PC-3 (cell line): ENCODE measurements at regions of chrX and their contacts with region 1.

Region 1: GRCh38 chrX:48917139-48918001 is 1.5 kb downstream of the PIM2 start:
- DNase-seq: peak; percentile 93
- ATAC-seq: peak; percentile 36
- H3K4me3 ChIP-seq: peak overlapping the region; percentile 90
- H3K27ac ChIP-seq: no peak overlapping the region
- H3K4me1 ChIP-seq: peaks cover 19% of the 10 kb centered on the region
- H3K27me3 ChIP-seq: no peaks in the 10 kb centered on the region
- CTCF ChIP-seq: peak; percentile 91

Region 2: DNA sequence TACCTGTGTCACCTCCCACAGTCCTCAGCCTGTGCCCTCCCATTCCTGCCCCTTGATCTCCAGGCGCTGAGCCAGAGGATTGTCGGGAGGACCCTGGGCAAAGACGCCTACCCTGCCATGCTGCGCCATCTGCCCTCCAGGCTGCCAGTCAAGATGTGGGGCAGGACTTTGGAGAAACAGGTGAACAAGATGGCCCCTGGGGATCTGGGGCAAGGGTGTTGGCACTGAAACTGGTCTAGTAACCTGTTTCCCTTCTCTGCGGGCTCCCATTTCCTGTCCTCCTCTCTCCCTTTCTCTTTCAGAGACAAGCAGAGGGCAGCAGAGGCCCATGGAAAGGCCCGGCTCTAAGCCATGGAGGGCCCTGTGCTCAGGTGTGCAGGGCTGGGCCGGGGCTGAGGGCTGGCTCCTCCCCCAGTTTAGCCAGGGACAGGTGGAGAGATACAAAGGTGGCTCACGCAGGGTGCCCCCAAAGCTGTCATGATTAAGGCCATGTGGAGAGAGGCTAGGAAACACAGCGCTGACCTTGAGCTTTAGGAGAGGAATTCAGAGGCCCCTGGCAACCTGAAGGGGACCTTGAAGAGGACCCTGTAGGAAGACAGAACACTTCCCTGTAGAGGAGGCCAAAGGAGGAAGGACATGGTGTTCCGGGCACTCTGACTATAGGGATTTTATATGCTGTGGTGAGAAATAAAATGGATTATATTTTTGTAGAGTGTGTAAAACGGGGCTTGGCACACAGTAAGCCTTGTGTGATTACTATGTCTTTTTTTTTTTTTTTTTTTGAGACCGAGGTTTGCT is 155.5 kb before region 1 on chrX and contains the start of gene GLOD5:
- CTCF ChIA-PET with region 1: no interaction called
- POLR2A ChIA-PET with region 1: no interaction called
- intact Hi-C with region 1: loop called (anchors 5 kb)
- DNase-seq: peak; percentile 88
- ATAC-seq: peak; percentile 100
- H3K4me3 ChIP-seq: no peak within 1 kb of the TSS
- H3K27ac ChIP-seq: 0 out of 2 replicates have a peak within 1 kb of the TSS, but pooled peaks have one; percentile 14
- H3K4me1 ChIP-seq: peaks cover 5% of the 10 kb centered on the region
- H3K27me3 ChIP-seq: no peaks in the 10 kb centered on the region
- CTCF ChIP-seq: peak; percentile 72
- total RNA-seq, gene GLOD5: not detected in 2 replicates

Region 3: DNA sequence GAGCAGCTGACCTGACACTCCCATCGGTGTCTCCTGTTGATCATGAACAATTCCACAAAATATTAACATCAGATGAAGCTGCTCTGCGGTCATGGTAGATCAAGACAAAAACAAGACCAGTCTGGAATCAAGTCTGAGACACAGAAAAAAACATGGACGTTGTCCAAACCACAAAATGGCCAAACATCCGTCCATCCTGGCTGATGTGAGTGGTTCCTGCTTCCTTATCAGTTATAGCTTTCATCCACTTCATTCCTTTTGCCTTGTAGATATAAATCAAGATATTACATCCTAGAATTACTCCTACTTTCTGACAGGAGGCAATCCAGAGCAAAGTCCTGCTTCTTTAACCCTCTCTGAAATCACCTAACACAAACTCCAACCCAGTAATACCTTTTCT is 53.2 kb before region 1 on chrX:
- CTCF ChIA-PET with region 1: no interaction called
- POLR2A ChIA-PET with region 1: no interaction called
- intact Hi-C with region 1: loop called (anchors 1 kb)
- DNase-seq: peak; percentile 42
- ATAC-seq: no peak
- H3K4me3 ChIP-seq: no peak overlapping the region
- H3K27ac ChIP-seq: no peak overlapping the region
- H3K4me1 ChIP-seq: peaks cover 20% of the 10 kb centered on the region
- H3K27me3 ChIP-seq: no peaks in the 10 kb centered on the region
- CTCF ChIP-seq: no peak

Region 4: DNA sequence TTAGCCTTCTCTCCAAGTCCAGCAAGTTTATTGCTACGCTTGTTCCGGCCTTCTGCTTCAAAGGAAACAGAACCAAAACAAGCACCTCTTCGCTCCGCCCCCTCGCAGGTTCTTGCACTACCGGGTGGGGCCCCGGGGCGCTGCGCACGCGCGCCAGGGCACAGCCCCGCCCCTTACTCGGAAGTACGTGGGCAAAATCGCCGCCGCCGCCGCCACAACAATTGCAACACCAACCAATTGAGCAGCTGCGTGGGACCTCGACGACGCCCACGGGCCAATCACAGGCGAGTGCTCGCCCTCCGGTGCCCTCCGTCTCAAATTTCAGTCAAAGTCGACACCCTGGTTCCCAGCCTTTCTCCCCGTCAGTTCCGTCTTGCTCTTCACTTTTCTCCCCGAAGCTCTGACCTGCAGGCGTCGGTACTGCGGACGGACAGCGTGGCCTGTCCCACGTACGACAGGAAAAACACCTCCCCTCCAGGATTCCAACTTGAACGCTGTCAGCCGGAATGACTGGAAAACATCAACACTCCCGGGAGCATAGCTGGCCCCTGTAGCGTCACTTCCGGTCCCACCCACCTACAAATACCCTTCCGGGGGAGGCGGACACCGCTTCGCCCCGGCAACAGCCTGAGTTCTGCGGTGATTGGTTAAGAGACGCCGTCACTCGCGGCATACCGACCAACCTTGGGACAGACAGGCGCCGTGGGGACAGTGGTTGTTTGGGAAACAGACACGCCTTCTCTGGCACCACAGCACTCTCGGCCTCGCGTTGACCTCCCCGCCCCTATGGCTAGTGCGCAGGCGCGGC is 40.7 kb after region 1 on chrX:
- CTCF ChIA-PET with region 1: no interaction called
- POLR2A ChIA-PET with region 1: no interaction called
- intact Hi-C with region 1: loop called (anchors 5 kb)
- DNase-seq: peak; percentile 97
- ATAC-seq: peak; percentile 91
- H3K4me3 ChIP-seq: peak overlapping the region; percentile 89
- H3K27ac ChIP-seq: peak overlapping the region; percentile 96
- H3K4me1 ChIP-seq: peaks cover 19% of the 10 kb centered on the region
- H3K27me3 ChIP-seq: no peaks in the 10 kb centered on the region
- CTCF ChIP-seq: no peak